Ovary (tissue), 10 donors: ENCODE measurements at regions of chr6 and their contacts with region 1.

Region 1: DNA sequence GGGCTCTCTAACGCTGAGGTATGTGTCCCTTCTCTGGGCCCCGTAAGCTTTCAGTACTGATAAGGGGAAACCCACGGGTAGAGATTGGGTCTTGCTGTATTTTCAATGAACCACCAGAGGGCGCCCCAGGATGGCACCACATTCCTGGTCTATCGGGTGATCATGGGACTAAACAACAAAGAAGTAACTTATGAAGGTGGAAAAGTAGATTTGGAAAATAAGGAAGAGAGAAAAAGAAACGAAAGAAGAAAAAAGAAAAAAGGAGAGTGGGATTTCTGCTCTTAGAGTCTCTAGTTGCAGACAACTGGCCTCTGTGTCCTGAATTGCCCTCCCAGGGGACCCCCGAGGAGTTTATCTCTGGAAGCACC is 93.8 kb downstream of the GMPR start:
- DNase-seq: peak; percentile 63 to 81 (median 78)
- H3K4me3 ChIP-seq: no peak overlapping the region
- H3K27ac ChIP-seq: no peak overlapping the region
- H3K4me1 ChIP-seq: peaks cover 7% of the 10 kb centered on the region
- H3K27me3 ChIP-seq: no peaks in the 10 kb centered on the region
- CTCF ChIP-seq: peak; percentile 77 to 85 (median 80)
- EP300 ChIP-seq: no peak
- POLR2A ChIP-seq: no peak

Region 2: GRCh38 chr6:16355699-16356446 is 23.7 kb after region 1 on chr6:
- intact Hi-C with region 1: no loop called
- DNase-seq: no peak
- H3K4me3 ChIP-seq: no peak overlapping the region
- H3K27ac ChIP-seq: no peak overlapping the region
- H3K4me1 ChIP-seq: peaks cover 3% of the 10 kb centered on the region
- H3K27me3 ChIP-seq: no peaks in the 10 kb centered on the region
- CTCF ChIP-seq: no peak
- EP300 ChIP-seq: no peak
- POLR2A ChIP-seq: no peak

Region 3: DNA sequence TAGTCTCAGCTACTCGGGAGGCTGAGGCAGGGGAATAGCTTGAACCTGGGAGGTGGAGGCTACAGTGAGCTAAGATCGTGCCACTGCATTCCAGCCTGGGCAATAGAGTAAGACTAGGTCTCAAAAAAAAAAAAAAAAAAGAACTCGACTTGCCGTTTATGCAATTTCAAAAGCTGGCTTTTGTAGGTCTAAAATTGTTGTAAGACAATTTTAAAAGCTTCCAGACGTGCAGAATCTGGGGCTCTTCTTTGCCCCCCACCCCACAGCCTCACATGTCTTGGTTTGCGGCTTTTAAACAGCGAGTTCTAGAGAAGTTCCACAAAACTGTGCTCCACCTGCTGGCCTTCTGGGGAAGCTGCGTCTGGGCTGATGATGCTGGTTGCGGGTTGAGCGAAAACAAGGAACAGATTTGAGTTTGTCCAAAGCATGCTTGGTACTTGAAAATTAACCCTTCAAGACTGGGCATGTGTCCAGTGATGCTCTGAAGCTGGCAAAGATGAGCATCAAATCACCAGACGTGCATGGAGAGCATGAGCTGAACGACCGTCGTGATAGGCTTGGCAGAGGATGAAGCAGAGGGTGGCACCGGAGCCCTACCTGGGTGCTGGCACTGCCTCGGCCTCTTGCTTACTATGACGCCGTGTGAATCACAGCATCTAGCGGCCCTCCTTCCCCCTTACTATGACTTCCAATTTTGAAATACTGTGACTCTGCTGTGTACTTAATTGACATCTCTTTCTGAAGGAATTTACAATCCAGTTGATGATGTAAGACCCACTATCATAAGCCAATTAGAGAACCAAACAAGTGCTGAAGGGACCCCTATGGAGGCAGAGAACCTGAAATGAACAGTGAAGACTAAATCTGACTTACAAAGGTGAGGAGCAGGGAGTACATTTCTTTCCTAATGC is 77.6 kb after region 1 on chr6:
- intact Hi-C with region 1: loop called in 3 of 4 experiments (anchors 5 to 10 kb)
- DNase-seq: peak; percentile 25 to 59 (median 38)
- H3K4me3 ChIP-seq: no peak overlapping the region
- H3K27ac ChIP-seq: no peak overlapping the region
- H3K4me1 ChIP-seq: peaks cover 7% of the 10 kb centered on the region
- H3K27me3 ChIP-seq: no peaks in the 10 kb centered on the region
- CTCF ChIP-seq: peak in 1 of 3 donors; percentile 39
- EP300 ChIP-seq: no peak
- POLR2A ChIP-seq: no peak

Region 4: DNA sequence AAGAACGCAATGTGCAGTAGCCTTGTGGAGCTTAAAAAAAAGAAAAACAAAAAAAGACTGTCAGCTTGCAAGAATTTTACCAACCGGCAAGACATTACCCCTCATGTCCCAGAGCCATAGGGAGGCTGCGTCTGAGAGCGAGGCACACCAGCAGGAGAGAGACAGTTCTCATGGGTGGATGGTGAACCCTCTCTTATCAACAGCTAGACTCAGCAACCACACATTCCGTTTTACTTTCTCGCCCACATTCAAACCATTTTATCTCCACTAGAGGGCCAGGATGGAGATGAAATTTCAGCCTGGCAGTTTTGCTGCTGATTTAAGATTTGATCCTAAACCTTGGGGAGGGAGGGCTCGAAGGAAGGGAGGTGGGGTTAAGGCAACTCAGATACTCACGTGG is 182.1 kb after region 1 on chr6:
- intact Hi-C with region 1: loop called in 1 of 4 experiments (anchors 10 kb)
- DNase-seq: peak in 1 of 5 donors; percentile 21
- H3K4me3 ChIP-seq: no peak overlapping the region
- H3K27ac ChIP-seq: no peak overlapping the region
- H3K4me1 ChIP-seq: peaks cover 18% of the 10 kb centered on the region
- H3K27me3 ChIP-seq: no peaks in the 10 kb centered on the region
- CTCF ChIP-seq: peak; percentile 16 to 34 (median 33)
- EP300 ChIP-seq: no peak
- POLR2A ChIP-seq: no peak

Region 5: GRCh38 chr6:16769131-16769985 is 437.2 kb after region 1 on chr6:
- intact Hi-C with region 1: loop called (anchors 5 kb)
- DNase-seq: no peak
- H3K4me3 ChIP-seq: no peak overlapping the region
- H3K27ac ChIP-seq: no peak overlapping the region
- H3K4me1 ChIP-seq: peaks cover 2% of the 10 kb centered on the region
- H3K27me3 ChIP-seq: no peaks in the 10 kb centered on the region
- CTCF ChIP-seq: no peak
- EP300 ChIP-seq: no peak
- POLR2A ChIP-seq: no peak